ENCODE measurements at regions of chr15 and their contacts with region 1.

Region 1: GRCh38 chr15:50354838-50355618 is at the start of gene GABPB1:
- DNase-seq: peak; percentile 97
- H3K4me3 Mint-ChIP-seq: peak within 1 kb of the TSS; percentile 92
- H3K27ac Mint-ChIP-seq: peak within 1 kb of the TSS; percentile 100
- H3K4me1 Mint-ChIP-seq: peaks cover 42% of the 10 kb centered on the region
- H3K27me3 Mint-ChIP-seq: peaks cover 2% of the 10 kb centered on the region
- total RNA-seq, gene GABPB1: 78.3 and 79.5 TPM in 2 replicates

Region 2: DNA sequence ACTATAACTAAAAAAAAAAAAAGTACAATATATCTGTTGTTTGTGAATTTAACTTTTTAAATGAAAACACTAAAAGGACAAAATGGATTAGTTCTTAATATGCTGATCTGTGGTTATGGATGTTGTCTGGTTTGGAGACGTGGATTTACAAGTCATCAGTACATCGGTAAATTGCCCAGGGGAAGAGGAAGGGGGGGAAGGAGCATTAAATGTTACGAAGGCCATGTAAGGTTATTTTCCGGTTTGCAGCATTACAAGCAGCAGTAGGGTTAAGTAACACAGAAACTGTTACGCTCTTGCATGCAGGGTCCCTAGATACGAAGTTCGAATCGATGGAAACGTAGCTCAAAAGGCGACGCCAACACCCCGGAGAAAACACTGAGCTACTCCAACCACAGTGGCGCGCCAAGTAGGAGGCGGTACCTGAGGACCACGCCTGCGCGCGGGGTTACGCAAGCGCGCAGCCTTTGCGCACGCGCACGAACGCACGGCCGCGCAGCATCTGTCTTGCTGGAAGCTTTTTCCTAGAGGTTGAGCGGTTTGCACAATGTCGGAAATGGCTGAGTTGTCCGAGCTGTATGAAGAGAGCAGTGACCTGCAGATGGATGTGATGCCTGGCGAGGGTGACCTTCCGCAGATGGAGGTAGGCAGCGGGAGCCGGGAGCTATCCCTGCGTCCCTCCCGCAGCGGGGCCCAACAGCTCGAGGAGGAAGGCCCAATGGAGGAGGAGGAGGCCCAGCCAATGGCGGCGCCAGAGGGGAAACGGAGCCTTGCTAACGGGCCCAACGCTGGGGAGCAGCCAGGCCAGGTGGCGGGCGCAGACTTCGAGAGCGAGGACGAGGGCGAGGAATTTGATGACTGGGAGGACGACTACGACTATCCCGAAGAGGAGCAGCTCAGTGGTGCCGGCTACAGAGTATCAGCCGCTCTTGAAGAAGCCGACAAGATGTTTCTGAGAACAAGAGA is 1477.1 kb before region 1 on chr15 and contains the start of gene EID1:
- intact Hi-C with region 1: loop called (anchors 2 kb)
- DNase-seq: peak; percentile 99
- H3K4me3 Mint-ChIP-seq: peak within 1 kb of the TSS; percentile 97
- H3K27ac Mint-ChIP-seq: peak within 1 kb of the TSS; percentile 99
- H3K4me1 Mint-ChIP-seq: peaks cover 46% of the 10 kb centered on the region
- H3K27me3 Mint-ChIP-seq: peaks cover 4% of the 10 kb centered on the region
- total RNA-seq, gene EID1: 192 and 209 TPM in 2 replicates

Region 3: GRCh38 chr15:49620658-49621368 is 734.2 kb before region 1 on chr15 and contains the starts of genes DTWD1 and FAM227B:
- intact Hi-C with region 1: loop called (anchors 5 kb)
- DNase-seq: peak; percentile 98
- H3K4me3 Mint-ChIP-seq: peak within 1 kb of the TSS; percentile 97
- H3K27ac Mint-ChIP-seq: peak within 1 kb of the TSS; percentile 98
- H3K4me1 Mint-ChIP-seq: peaks cover 38% of the 10 kb centered on the region
- H3K27me3 Mint-ChIP-seq: no peaks in the 10 kb centered on the region
- total RNA-seq, gene DTWD1: 24.9 and 25.8 TPM in 2 replicates
- total RNA-seq, gene FAM227B: 2.1 and 2.7 TPM in 2 replicates

Region 4: DNA sequence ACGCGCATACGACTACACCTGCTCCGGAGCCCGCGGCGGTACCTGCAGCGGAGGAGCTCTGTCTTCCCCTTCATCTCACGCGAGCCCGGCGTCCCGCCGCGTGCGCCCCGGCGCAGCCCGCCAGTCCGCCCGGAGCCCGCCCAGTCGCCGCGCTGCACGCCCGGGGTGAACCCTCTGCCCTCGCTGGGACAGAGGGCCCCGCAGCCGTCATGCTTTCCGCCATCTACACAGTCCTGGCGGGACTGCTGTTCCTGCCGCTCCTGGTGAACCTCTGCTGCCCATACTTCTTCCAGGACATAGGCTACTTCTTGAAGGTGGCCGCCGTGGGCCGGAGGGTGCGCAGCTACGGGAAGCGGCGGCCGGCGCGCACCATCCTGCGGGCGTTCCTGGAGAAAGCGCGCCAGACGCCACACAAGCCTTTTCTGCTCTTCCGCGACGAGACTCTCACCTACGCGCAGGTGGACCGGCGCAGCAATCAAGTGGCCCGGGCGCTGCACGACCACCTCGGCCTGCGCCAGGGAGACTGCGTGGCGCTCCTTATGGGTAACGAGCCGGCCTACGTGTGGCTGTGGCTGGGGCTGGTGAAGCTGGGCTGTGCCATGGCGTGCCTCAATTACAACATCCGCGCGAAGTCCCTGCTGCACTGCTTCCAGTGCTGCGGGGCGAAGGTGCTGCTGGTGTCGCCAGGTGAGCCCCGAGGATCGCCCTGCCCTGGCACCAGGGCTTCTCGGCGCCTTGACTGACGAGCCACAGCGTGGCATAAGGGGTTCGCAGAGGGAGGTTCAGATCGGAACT is 172.6 kb before region 1 on chr15:
- intact Hi-C with region 1: loop called (anchors 2 kb)
- DNase-seq: peak; percentile 87
- H3K4me3 Mint-ChIP-seq: peak overlapping the region; percentile 98
- H3K27ac Mint-ChIP-seq: peak overlapping the region; percentile 87
- H3K4me1 Mint-ChIP-seq: peaks cover 51% of the 10 kb centered on the region
- H3K27me3 Mint-ChIP-seq: no peaks in the 10 kb centered on the region

Region 5: DNA sequence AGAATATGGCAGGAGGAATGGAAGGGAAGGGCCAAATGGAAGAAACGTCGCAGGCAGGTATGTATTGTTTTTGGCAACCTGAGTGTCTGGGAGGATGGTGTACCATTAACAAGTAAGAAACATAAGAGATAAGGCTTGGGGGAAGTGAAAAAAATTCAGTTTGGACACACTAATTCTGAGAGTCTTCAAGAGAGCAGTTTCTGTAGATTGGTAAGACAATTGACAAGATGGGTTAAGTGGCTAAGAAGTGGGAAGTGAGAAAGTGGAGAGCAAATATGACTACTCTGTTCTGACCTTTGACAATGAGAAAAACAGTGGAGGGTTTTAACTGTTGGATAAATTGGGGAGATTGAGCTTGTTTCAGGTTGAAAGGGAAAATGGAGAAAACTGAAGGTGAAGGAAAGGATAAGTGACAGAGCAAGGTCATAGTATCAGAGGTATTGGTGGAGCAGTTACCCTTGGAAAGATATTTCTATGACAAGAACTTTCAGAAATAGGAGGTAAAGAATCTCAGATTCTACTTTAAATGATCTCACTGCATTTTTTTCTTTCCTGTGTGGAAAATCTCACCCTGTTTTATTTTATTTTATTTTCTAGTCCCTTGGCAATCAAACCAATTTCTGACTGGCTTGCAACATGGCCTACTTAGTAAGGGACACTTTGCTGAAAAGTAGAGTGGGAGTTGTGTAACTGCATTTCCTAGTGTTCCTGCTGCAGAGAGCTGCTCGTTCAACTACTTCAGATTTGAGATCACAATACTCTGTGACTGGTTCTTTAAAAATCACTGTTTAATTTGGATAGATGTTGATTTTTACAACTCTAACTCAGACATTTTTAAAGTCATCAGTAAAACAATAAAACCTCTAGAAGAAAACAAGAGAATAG is 23.1 kb after region 1 on chr15:
- intact Hi-C with region 1: loop called (anchors 1 kb)
- DNase-seq: no peak
- H3K4me3 Mint-ChIP-seq: peak overlapping the region; percentile 7
- H3K27ac Mint-ChIP-seq: peak overlapping the region; percentile 88
- H3K4me1 Mint-ChIP-seq: peaks cover 13% of the 10 kb centered on the region
- H3K27me3 Mint-ChIP-seq: no peaks in the 10 kb centered on the region

Region 6: GRCh38 chr15:50562735-50563640 is 208.0 kb after region 1 on chr15:
- intact Hi-C with region 1: loop called (anchors 5 kb)
- DNase-seq: peak; percentile 76
- H3K4me3 Mint-ChIP-seq: peak overlapping the region; percentile 29
- H3K27ac Mint-ChIP-seq: peak overlapping the region; percentile 87
- H3K4me1 Mint-ChIP-seq: peaks cover 13% of the 10 kb centered on the region
- H3K27me3 Mint-ChIP-seq: no peaks in the 10 kb centered on the region

Measured in activated CD4-positive, alpha-beta T cell treated with anti-CD3 and anti-CD28 coated beads, Interleukin-2, amount 10 ng/mL, durations not matched to agents 24 days and 14 days (primary cell).